ENCODE measurements at regions of chr13 and their contacts with region 1.

Region 1: DNA sequence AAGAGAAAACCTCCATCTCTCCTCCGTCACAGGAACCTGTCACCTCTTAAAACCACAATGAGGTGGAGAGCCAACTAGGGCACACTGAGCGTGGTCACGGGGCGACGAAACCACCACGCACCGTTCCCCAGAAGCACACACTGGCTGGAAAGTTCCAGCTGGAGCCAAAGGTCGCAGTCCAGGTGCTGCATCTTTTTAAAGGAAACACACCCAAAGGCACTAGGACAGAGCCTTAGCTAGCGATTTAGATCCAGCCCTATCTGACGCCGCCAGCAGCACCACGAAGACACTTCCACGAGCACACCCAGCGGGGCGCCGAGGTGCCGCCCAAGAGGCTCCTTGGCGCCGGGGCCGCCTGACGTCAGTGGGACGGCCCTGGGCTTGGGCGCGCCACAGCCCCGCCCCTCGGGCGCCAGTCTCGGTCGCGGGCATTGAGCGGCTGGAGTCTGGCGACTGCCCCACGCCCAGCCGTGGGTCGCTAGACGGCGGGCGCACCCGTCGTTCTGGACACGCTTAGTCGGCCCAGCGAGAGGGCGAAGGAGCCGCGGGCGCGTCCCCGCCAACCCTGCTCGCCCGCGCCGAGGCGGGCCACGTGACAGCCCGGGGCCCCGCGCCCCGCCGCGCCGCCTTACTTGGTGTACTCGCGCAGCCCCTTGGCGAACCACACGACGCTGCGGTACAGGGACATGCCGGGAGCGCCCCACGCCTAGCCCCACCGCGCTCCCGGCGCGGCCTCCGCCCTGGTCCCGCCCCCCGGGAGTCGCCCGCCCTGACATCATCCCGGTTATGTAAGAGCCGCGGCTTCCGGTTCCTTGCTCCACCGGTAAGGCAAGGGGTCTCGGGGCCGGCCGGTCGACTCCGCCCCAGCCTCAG is at the start of gene DHRS12:
- DNase-seq: peak; percentile 88 to 96
- ATAC-seq: peak; percentile 70 to 90 (median 76)
- H3K4me3 ChIP-seq: peak within 1 kb of the TSS; percentile 63
- H3K4me3 Mint-ChIP-seq: peak within 1 kb of the TSS; percentile 94
- H3K27ac ChIP-seq: peak within 1 kb of the TSS; percentile 97
- H3K27ac Mint-ChIP-seq: peak within 1 kb of the TSS; percentile 91 to 99
- H3K4me1 ChIP-seq: peaks cover 27% of the 10 kb centered on the region
- H3K4me1 Mint-ChIP-seq: peaks cover 34 to 35% of the 10 kb centered on the region in 2 donors
- H3K27me3 ChIP-seq: no peaks in the 10 kb centered on the region
- H3K27me3 Mint-ChIP-seq: peaks cover 0 to 8% of the 10 kb centered on the region in 2 donors
- CTCF ChIP-seq: no peak
- total RNA-seq, gene DHRS12: 7.0 to 11.7 (median 10.4) TPM

Region 2: GRCh38 chr13:50081679-50082425 is 1721.8 kb before region 1 on chr13:
- intact Hi-C with region 1: loop called (anchors 5 kb)
- DNase-seq: peak; percentile 97 to 100
- ATAC-seq: peak; percentile 71 to 90 (median 79)
- H3K4me3 ChIP-seq: peak overlapping the region; percentile 79
- H3K4me3 Mint-ChIP-seq: peak overlapping the region; percentile 99
- H3K27ac ChIP-seq: peak overlapping the region; percentile 93
- H3K27ac Mint-ChIP-seq: peak overlapping the region; percentile 96 to 97
- H3K4me1 ChIP-seq: peaks cover 12% of the 10 kb centered on the region
- H3K4me1 Mint-ChIP-seq: peaks cover 44 to 56% of the 10 kb centered on the region in 2 donors
- H3K27me3 ChIP-seq: peaks cover 2% of the 10 kb centered on the region
- H3K27me3 Mint-ChIP-seq: peaks cover 0 to 3% of the 10 kb centered on the region in 2 donors
- CTCF ChIP-seq: no peak

Region 3: DNA sequence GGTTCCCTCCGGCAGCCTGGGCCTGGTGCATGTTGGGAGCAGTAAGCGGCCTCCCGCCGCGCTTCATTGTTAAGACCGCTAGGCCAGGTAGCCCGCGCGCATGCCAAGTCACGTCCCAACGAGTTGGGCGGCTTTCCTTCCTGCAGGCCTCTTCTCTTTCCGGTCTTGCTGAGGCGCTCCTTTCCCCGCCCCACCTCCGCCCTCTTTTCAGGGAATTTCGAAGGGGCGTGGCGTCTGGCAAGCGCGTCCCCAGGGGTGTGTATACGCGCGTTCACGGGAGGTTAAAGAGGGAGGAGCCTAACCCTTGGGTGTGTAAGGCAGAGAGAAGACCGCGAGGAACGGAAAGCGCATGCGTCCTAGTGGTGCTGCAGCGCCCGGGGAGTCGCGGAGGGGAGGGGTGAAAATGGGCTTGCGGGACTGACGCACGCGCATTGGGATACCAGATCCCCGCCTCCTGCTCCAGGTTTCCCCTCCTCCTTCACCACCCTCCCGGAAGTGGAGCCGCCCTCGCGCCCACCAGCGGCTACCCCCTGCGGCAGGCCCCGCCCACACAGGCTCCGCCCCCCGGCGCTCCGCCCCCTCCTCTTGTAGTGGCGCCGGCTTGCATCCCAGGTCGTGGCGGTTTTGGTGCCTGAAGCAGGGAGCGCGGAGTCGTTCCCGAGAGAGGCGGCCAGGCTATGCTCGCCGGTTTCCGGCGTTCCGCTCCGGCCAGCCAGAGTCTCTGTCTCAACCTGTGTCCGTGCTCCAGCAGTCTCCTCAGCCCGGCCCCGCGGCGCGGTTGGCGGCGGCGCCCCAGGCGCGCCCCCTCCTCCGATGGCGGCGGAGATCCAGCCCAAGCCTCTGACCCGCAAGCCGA is 219.6 kb before region 1 on chr13 and contains the start of gene WDFY2:
- intact Hi-C with region 1: loop called (anchors 1 kb)
- DNase-seq: peak; percentile 99 to 100
- ATAC-seq: peak; percentile 82 to 95 (median 84)
- H3K4me3 ChIP-seq: peak within 1 kb of the TSS; percentile 83
- H3K4me3 Mint-ChIP-seq: peak within 1 kb of the TSS; percentile 94
- H3K27ac ChIP-seq: peak within 1 kb of the TSS; percentile 86
- H3K27ac Mint-ChIP-seq: peak within 1 kb of the TSS; percentile 88 to 90
- H3K4me1 ChIP-seq: peaks cover 10% of the 10 kb centered on the region
- H3K4me1 Mint-ChIP-seq: peaks cover 26 to 35% of the 10 kb centered on the region in 2 donors
- H3K27me3 ChIP-seq: no peaks in the 10 kb centered on the region
- H3K27me3 Mint-ChIP-seq: no peaks in the 10 kb centered on the region
- CTCF ChIP-seq: no peak
- total RNA-seq, gene WDFY2: 29.5 to 32.1 (median 31.3) TPM

Region 4: DNA sequence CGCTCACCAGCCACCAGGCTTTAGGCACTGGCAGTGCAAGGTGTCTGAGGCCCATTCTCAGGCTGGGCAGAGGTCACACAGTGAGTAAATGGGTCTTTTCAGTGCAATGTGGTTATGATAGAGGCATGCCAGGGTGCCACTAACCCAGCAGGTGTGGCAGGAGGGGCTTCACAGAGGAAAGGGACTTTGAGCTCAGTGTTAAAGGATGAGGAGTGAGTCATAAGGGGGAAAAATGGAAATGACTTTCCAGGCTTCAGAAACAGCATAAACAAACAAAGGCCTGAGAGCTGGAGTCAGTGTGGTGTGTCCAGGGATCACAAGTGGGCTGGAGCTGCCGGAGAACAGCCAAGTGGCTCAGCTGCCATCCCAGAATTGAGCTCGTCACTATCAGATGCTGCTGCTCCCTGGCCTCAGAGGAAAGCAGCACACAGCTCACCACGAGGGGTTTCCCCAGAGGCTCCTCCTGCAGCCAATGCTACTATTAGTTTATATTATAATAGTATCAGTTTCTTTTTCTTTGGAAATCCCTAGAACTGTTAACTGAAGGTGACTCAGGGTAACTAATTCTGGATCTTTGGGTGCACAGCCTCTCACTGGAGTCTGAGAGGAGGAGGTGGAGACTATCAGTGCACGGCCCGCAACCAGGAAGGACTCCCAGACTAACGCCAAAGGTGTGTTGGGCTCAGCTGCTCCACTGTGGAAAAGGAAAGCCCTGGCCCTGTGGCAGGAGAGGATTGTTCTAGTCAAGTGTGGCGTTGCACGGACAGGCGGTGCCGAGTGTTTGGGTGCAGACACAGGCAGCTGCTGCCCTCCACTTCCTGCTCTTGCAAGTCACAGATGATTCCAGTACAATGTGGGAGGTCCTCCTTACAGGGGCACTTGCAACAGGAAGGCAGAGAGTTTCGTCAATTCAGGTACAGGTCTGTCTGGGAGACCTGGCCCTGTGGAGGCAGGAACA is 39.2 kb before region 1 on chr13:
- intact Hi-C with region 1: loop called (anchors 1 kb)
- DNase-seq: peak; percentile 52 to 81
- ATAC-seq: peak; percentile 86 to 93 (median 92)
- H3K4me3 ChIP-seq: no peak overlapping the region
- H3K4me3 Mint-ChIP-seq: peak overlapping the region; percentile 70
- H3K27ac ChIP-seq: peak overlapping the region; percentile 57
- H3K27ac Mint-ChIP-seq: peak overlapping the region; percentile 79 to 95
- H3K4me1 ChIP-seq: peaks cover 13% of the 10 kb centered on the region
- H3K4me1 Mint-ChIP-seq: peaks cover 16 to 17% of the 10 kb centered on the region in 2 donors
- H3K27me3 ChIP-seq: no peaks in the 10 kb centered on the region
- H3K27me3 Mint-ChIP-seq: no peaks in the 10 kb centered on the region
- CTCF ChIP-seq: no peak

Region 5: GRCh38 chr13:52011632-52012511 is 208.2 kb after region 1 on chr13 and contains the start of gene ALG11:
- intact Hi-C with region 1: loop called (anchors 1 kb)
- DNase-seq: peak; percentile 99
- ATAC-seq: peak; percentile 98 to 100 (median 98)
- H3K4me3 ChIP-seq: peak within 1 kb of the TSS; percentile 88
- H3K4me3 Mint-ChIP-seq: peak within 1 kb of the TSS; percentile 99
- H3K27ac ChIP-seq: peak within 1 kb of the TSS; percentile 64
- H3K27ac Mint-ChIP-seq: peak within 1 kb of the TSS; percentile 93 to 96
- H3K4me1 ChIP-seq: peaks cover 9% of the 10 kb centered on the region
- H3K4me1 Mint-ChIP-seq: peaks cover 21 to 32% of the 10 kb centered on the region in 2 donors
- H3K27me3 ChIP-seq: peaks cover 8% of the 10 kb centered on the region
- H3K27me3 Mint-ChIP-seq: peaks cover 24 to 27% of the 10 kb centered on the region in 2 donors
- CTCF ChIP-seq: no peak
- total RNA-seq, gene ALG11: 30.8 to 35.8 (median 35.2) TPM

Measured in natural killer cell (primary cell).